Activated CD4-positive, alpha-beta memory T cell treated with anti-CD3 and anti-CD28 coated beads, Interleukin-2, amount 10 ng/mL, durations not matched to agents 7 days and 5 days (primary cell): ENCODE measurements at regions of chr5 and their contacts with region 1.

Region 1: DNA sequence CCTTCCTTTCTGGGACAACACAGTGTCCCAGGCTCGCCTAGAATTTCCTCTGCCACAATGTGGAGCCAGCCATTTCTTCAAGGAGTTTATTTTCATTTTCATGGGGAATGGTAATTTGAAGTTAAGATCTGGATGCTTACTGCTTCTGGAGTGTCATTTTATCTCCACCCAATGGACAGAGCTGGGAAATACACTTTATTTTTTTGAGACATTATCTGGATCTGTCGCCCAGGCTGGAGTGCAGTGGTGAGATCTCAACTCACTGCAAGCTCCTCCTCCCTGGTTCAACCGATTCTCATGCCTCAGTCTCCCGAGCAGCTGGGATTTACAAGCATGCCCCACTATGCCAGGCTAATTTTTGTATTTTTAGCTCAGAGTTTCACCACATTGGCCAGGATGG is 12.7 kb upstream of the THG1L start:
- DNase-seq: no peak
- H3K4me3 Mint-ChIP-seq: no peak overlapping the region
- H3K27ac Mint-ChIP-seq: no peak overlapping the region
- H3K4me1 Mint-ChIP-seq: peaks cover 33% of the 10 kb centered on the region
- H3K27me3 Mint-ChIP-seq: no peaks in the 10 kb centered on the region

Region 2: DNA sequence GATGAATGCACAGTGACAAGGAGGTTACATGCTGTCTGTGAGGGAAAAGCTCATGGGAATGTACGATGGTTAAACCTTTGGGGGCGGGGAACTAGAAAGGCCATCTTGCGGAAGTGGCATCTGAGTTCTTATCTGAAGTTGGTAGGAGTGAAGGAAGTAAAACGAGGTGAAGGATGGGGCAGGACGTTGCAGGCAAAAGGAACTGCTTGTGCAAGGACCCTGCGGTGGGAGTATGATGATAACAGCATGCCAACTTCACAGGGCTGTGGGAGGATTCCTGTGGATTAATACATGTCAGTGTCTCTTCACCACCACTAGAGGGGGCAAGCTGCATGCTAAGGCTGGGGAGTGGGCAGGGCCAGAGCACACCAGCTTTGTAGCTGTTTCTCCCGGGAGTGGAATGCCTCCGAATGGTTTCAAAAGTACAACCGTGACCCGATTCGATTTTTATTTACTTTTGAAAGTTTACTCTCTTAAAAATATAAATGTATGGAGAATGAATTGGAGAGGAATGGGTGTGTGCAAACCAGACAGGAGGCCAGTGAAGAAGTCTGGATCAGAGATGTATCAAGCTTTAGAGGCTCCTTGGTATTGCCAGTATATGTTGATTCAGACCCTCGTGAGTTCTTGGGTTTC is 390.1 kb before region 1 on chr5:
- CTCF ChIA-PET with region 1: interaction called, 18 read pairs
- POLR2A ChIA-PET with region 1: no interaction called
- DNase-seq: peak; percentile 58
- H3K4me3 Mint-ChIP-seq: no peak overlapping the region
- H3K27ac Mint-ChIP-seq: peak overlapping the region; percentile 77
- H3K4me1 Mint-ChIP-seq: peaks cover 22% of the 10 kb centered on the region
- H3K27me3 Mint-ChIP-seq: no peaks in the 10 kb centered on the region

Region 3: GRCh38 chr5:157431544-157432200 is 286.8 kb before region 1 on chr5:
- CTCF ChIA-PET with region 1: interaction called, 43 read pairs
- POLR2A ChIA-PET with region 1: interaction called, 5 read pairs
- DNase-seq: peak; percentile 26
- H3K4me3 Mint-ChIP-seq: no peak overlapping the region
- H3K27ac Mint-ChIP-seq: no peak overlapping the region
- H3K4me1 Mint-ChIP-seq: peaks cover 7% of the 10 kb centered on the region
- H3K27me3 Mint-ChIP-seq: peaks cover 13% of the 10 kb centered on the region

Region 4: GRCh38 chr5:157575381-157576020 is 143.0 kb before region 1 on chr5 and contains the start of gene ADAM19:
- CTCF ChIA-PET with region 1: interaction called, 10 read pairs
- POLR2A ChIA-PET with region 1: no interaction called
- DNase-seq: peak; percentile 67
- H3K4me3 Mint-ChIP-seq: peak within 1 kb of the TSS; percentile 92
- H3K27ac Mint-ChIP-seq: peak within 1 kb of the TSS; percentile 88
- H3K4me1 Mint-ChIP-seq: peaks cover 59% of the 10 kb centered on the region
- H3K27me3 Mint-ChIP-seq: no peaks in the 10 kb centered on the region
- total RNA-seq, gene ADAM19: 309 to 313 TPM

Region 5: DNA sequence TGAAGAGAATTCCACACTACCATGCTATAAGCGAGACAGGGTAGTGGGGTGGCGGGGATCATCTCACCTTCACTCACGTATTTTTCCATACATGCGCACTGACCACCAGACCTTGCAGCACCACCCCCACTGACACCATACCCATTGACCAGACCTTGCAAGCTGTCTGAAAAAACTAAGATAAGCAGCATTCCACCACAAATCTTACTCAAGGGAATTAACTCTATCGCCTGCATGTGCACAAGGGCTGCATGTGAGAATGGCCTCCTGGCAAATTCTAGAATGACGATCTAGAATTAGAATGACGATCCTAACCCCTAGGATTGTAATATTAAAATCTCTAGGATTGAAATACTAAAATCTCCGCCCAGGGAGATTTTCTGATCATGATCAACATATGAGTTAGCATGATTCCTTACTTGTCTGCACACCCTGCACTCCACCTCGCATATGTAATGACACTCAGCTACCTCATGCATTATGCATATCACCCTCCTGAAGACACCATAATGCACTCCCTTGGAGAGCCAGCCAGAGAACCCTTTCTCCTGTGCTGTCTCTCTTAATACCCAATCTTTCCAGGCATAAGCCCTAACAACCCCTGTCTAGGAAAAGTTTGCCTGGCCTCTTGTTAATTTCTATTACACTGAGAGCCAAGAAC is 78.0 kb before region 1 on chr5:
- CTCF ChIA-PET with region 1: no interaction called
- POLR2A ChIA-PET with region 1: no interaction called
- DNase-seq: no peak
- H3K4me3 Mint-ChIP-seq: no peak overlapping the region
- H3K27ac Mint-ChIP-seq: no peak overlapping the region
- H3K4me1 Mint-ChIP-seq: no peaks in the 10 kb centered on the region
- H3K27me3 Mint-ChIP-seq: no peaks in the 10 kb centered on the region

Region 6: GRCh38 chr5:157731272-157732129 is 13.0 kb after region 1 on chr5 and contains the start of gene THG1L:
- CTCF ChIA-PET with region 1: interaction called, 25 read pairs
- POLR2A ChIA-PET with region 1: interaction called, 10 read pairs
- DNase-seq: peak; percentile 98
- H3K4me3 Mint-ChIP-seq: peak within 1 kb of the TSS; percentile 80
- H3K27ac Mint-ChIP-seq: peak within 1 kb of the TSS; percentile 84
- H3K4me1 Mint-ChIP-seq: peaks cover 30% of the 10 kb centered on the region
- H3K27me3 Mint-ChIP-seq: no peaks in the 10 kb centered on the region
- total RNA-seq, gene THG1L: 10.6 to 11.4 TPM